Esophagus muscularis mucosa (tissue), 4 donors: ENCODE measurements at regions of chr13 and their contacts with region 1.

Region 1: DNA sequence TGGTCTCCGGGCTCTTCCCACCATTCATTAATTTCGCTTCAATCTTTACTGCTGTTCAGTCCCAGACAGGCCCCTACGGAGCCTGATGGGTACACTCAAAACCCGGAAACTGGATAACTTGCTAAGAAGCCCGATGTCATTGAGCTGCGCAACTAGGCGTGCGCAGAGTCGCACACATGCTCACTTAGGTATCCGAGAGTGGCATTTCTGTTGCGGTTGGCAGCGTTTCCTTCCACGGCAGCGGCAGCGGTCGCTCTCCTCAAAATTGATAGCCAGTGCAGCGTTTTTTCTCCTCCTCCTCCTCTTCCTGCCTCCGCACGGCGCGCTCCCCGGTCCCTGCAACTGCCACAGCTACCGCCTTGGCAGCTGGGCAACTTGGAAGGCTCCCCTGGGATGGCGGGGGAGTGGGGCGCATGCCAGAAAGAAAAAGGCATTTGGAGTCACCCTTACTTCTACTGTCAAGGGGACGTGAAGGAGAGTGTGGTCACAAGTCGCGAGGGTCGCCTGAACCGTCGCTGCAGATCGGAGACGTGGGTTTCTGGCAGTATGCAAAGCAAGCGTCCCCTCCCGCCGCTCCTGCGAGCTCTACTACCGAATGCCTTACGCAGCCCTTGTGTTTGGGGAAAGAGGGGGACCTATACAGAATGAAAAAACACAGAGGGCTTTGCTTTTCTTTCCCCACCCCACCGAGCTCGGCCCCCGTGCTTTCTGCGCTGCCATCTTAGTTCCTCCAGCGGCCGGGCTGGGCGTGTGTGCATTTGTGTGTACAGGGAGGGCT is 2.4 kb upstream of the MYCBP2 start:
- DNase-seq: no peak
- H3K4me3 ChIP-seq: peak overlapping the region; percentile 65 to 89 (median 82)
- H3K27ac ChIP-seq: peak overlapping the region; percentile 82 to 86 (median 84)
- H3K4me1 ChIP-seq: peaks cover 17 to 39% (median 37%) of the 10 kb centered on the region in 4 donors
- H3K27me3 ChIP-seq: no peaks in the 10 kb centered on the region
- CTCF ChIP-seq: peak in 1 of 3 experiments; percentile 4
- EP300 ChIP-seq: no peak
- POLR2A ChIP-seq: no peak

Region 2: GRCh38 chr13:77026818-77027585 is 302.3 kb before region 1 on chr13 and contains the start of gene FBXL3:
- intact Hi-C with region 1: loop called (anchors 10 kb)
- DNase-seq: peak; percentile 93
- H3K4me3 ChIP-seq: peak within 1 kb of the TSS; percentile 90 to 99 (median 97)
- H3K27ac ChIP-seq: peak within 1 kb of the TSS; percentile 96 to 100 (median 100)
- H3K4me1 ChIP-seq: peaks cover 44 to 50% (median 48%) of the 10 kb centered on the region in 4 donors
- H3K27me3 ChIP-seq: no peaks in the 10 kb centered on the region
- CTCF ChIP-seq: no peak
- EP300 ChIP-seq: no peak
- POLR2A ChIP-seq: peak; percentile 42
- total RNA-seq, gene FBXL3: 76.9 to 118 (median 80.5) TPM

Region 3: DNA sequence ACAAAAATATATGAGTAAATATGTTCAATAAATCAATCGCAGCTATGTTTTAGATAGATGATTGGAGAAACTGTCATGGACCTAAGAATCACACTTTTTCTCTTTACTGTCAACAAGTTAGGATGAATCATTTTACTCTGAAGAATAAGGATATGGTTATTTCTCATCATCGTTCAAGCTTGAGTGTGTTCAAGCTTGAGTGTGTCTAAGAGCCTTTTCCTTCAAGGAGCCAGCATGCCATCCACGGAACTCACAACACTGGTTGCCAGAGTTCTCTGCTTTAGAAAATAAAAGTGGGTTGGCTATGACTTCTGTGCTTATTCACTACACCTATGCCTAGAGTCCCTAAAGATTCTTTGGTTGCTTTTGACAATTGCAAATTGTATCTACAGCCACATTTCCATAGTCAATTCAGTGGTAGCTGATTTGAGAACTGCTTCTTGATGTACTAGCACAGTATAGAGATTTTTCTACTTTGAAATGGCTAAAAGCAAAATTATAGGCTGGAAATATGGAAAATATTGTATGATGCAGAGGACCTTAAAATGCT is 148.1 kb after region 1 on chr13:
- intact Hi-C with region 1: loop called (anchors 5 kb)
- DNase-seq: no peak
- H3K4me3 ChIP-seq: no peak overlapping the region
- H3K27ac ChIP-seq: no peak overlapping the region
- H3K4me1 ChIP-seq: peaks cover 0 to 14% (median 10%) of the 10 kb centered on the region in 4 donors
- H3K27me3 ChIP-seq: no peaks in the 10 kb centered on the region
- CTCF ChIP-seq: no peak
- EP300 ChIP-seq: no peak
- POLR2A ChIP-seq: no peak

Region 4: DNA sequence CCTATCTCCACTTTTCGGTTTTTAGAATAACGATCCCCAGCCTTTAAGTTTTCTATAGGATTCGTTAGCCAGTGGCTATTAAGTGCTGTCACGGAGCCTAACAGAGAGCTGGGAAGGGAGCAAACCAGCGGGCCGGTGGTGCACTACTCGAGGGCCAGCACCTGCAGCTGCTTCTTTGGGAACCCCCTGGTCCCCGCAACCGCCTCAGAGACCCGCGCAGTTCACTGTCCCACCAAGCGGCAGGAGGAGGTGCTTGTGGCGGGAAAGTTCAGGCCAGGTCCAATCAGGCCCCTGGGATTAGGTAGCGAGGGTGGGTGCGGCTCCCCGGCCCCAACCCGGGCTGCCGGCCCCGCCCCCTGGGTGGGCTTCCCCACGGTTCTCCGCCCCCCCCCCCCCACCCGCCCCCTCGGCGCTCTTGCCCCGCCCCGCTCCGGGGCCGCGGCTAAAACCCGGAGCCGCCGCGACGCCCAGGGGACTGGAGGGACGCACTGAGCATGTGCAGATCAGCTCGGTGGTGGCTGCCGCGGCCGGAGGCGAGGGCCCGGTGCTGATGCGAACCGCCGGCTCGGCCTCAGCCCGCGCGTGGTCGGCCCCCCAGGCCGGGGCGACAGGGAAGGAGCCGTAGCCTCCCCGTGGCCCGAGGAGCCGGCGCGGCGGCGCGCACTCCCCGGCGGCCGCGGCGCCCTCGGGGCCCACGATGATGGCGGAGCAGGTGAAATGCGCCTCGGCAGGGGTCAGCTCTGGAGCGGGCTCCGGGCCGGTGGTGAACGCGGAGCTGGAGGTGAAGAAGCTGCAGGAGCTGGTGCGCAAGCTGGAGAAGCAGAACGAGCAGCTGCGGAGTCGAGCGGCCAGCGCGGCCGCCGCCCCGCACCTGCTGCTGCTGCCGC is 368.1 kb after region 1 on chr13 and contains the start of gene SLAIN1:
- intact Hi-C with region 1: loop called (anchors 10 kb)
- DNase-seq: no peak
- H3K4me3 ChIP-seq: peak within 1 kb of the TSS; percentile 70 to 85 (median 82)
- H3K27ac ChIP-seq: peak within 1 kb of the TSS; percentile 56 to 75 (median 70)
- H3K4me1 ChIP-seq: peaks cover 15 to 40% (median 33%) of the 10 kb centered on the region in 4 donors
- H3K27me3 ChIP-seq: peaks cover 0 to 10% (median 0%) of the 10 kb centered on the region in 4 donors
- CTCF ChIP-seq: no peak
- EP300 ChIP-seq: no peak
- POLR2A ChIP-seq: no peak
- total RNA-seq, gene SLAIN1: 7.1 to 12.3 (median 9.7) TPM